ENCODE measurements at regions of chr11 and their contacts with region 1.

Region 1: GRCh38 chr11:124739479-124740276 is at the start of gene NRGN:
- DNase-seq: peak; percentile 79
- ATAC-seq: peak; percentile 98
- H3K4me3 ChIP-seq: peak within 1 kb of the TSS; percentile 41 to 68 (median 64)
- H3K27ac ChIP-seq: no peak within 1 kb of the TSS
- H3K4me1 ChIP-seq: peaks cover 18% of the 10 kb centered on the region
- H3K27me3 ChIP-seq: peaks cover 2 to 77% of the 10 kb centered on the region in 2 experiments; a peak in 4 of 5 replicates
- CTCF ChIP-seq: 0 out of 2 replicates have a peak, but pooled peaks have one; percentile 5
- EP300 ChIP-seq: no peak
- POLR2A ChIP-seq: no peak
- RAD21 ChIP-seq: no peak
- total RNA-seq, gene NRGN: 0.18 TPM in 1 of 2 replicates, not detected in the other

Region 2: DNA sequence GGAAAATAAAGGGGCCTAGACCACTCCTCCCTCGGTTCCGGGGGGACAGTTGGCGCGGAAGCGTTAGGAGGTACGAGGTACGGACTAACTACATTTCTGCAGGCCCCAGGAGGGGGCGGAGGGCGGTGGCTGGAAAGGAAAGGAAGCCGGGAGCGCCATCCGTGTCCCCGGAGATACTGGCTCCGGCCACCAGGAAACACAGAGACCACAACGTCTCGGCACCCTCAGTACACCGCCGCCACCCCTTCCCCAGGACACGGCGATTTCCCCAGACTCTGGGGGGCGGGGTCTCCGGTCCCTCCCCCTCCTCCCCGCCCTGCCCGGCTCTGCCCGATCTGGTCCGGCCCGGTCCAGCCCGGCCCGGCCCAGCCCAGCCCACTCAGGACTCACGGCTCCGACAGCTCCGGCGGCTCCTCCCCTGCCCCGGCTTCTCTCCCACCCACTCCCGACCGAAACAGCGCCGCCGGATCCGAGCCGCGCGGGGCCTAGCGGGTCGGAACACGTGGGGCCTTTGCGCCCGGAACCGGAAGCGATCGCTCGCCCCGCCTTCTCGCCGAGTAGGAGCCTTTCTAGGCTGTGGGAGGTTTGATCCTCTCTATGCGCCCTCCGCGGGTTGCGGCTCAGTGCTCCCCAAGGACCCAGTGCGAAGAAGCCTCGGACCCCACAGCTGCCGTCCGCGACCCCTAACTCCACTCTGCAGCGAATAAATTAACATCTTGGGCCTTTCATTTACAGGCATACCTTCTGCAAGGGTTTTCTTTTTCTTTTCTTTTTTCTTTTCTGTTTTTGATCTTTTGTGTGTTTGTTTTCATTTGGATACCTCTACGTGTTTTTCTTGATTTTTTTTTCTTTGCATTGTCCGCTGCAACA is 998.3 kb before region 1 on chr11 and contains the start of gene ZNF202:
- CTCF ChIA-PET with region 1: no interaction called
- POLR2A ChIA-PET with region 1: no interaction called
- in situ Hi-C with region 1: no loop called
- intact Hi-C with region 1: loop called (anchors 5 kb)
- DNase-seq: peak; percentile 79
- ATAC-seq: peak; percentile 97
- H3K4me3 ChIP-seq: peak within 1 kb of the TSS; percentile 90 to 91 (median 90)
- H3K27ac ChIP-seq: peak within 1 kb of the TSS; percentile 80
- H3K4me1 ChIP-seq: peaks cover 23% of the 10 kb centered on the region
- H3K27me3 ChIP-seq: peaks cover 0 to 3% of the 10 kb centered on the region in 2 experiments; a peak in 1 of 5 replicates
- CTCF ChIP-seq: peak; percentile 35; the same call in 1 of the 2 replicates
- EP300 ChIP-seq: no peak
- POLR2A ChIP-seq: peak; percentile 57 to 71; a peak in 3 of 4 replicates
- RAD21 ChIP-seq: no peak
- total RNA-seq, gene ZNF202: 7.0 and 7.7 TPM in 2 replicates

Region 3: GRCh38 chr11:124800226-124800929 is 60.7 kb after region 1 on chr11 and contains the start of gene MSANTD2:
- CTCF ChIA-PET with region 1: no interaction called
- POLR2A ChIA-PET with region 1: interaction called, 4 read pairs
- in situ Hi-C with region 1: no loop called
- intact Hi-C with region 1: loop called (anchors 10 kb)
- DNase-seq: peak; percentile 46
- ATAC-seq: peak; percentile 98
- H3K4me3 ChIP-seq: peak within 1 kb of the TSS; percentile 94 to 96 (median 96)
- H3K27ac ChIP-seq: peak within 1 kb of the TSS; percentile 88
- H3K4me1 ChIP-seq: peaks cover 46% of the 10 kb centered on the region
- H3K27me3 ChIP-seq: no peaks in the 10 kb centered on the region; a peak in 1 of 5 replicates
- CTCF ChIP-seq: no peak; the same call in 1 of the 2 replicates
- EP300 ChIP-seq: peak in 1 of 2 experiments; percentile 10; a peak in 1 of 4 replicates
- POLR2A ChIP-seq: peak; percentile 83 to 96
- RAD21 ChIP-seq: no peak
- total RNA-seq, gene MSANTD2: 6.8 and 10.1 TPM in 2 replicates